Adrenal gland (tissue), 19 donors: ENCODE measurements at regions of chr13 and their contacts with region 1.

Region 1: DNA sequence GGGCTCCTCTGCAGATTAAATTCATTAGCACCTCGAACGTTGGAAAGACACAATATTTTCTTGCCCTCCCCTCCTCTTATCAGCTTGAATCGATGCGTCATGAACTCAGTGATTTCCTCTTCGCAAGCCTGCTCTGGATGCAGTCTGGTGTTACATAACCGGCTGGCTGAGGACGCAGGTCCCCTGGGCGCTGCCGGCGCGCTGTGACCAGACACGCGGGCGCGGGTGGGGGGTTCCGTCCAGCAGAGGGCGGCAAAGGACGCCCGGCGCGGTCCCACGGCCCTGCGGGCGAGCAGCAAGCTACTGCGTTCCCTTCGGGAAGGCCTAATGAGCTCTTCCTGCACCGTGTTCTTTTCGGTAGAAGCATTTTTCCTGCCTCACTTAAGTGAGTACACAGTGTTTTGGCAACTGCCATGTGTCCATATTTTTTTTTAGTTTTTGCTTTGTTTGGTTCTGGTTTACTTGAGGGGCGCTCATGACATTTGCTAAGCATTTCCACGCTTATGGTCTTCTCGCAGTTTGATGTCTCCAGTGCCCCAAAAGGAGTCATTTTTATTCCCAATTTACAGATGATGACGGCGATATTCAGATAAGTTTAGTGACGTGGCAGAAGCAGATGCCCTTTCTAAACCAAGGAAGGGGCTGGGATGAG is 112.2 kb upstream of the MBNL2 start:
- DNase-seq: peak; percentile 95 to 98 (median 96)
- H3K4me3 ChIP-seq: peak overlapping the region in 1 of 4 donors; percentile 16
- H3K27ac ChIP-seq: peak overlapping the region in 4 of 5 donors; percentile 10 to 61 (median 30)
- H3K4me1 ChIP-seq: peaks cover 9 to 38% of the 10 kb centered on the region in 2 donors
- H3K27me3 ChIP-seq: no peaks in the 10 kb centered on the region
- CTCF ChIP-seq: peak; percentile 91 to 98 (median 96)
- POLR2A ChIP-seq: peak in 1 of 2 donors; percentile 29

Region 2: GRCh38 chr13:96810104-96810503 is 299.9 kb before region 1 on chr13:
- intact Hi-C with region 1: no loop called
- DNase-seq: no peak
- H3K4me3 ChIP-seq: no peak overlapping the region
- H3K27ac ChIP-seq: no peak overlapping the region
- H3K4me1 ChIP-seq: no peaks in the 10 kb centered on the region
- H3K27me3 ChIP-seq: no peaks in the 10 kb centered on the region
- CTCF ChIP-seq: no peak
- POLR2A ChIP-seq: no peak

Region 3: GRCh38 chr13:97212601-97213040 is 102.7 kb after region 1 on chr13:
- intact Hi-C with region 1: loop called (anchors 5 kb)
- DNase-seq: peak in 3 of 7 donors; percentile 39 to 45 (median 40)
- H3K4me3 ChIP-seq: no peak overlapping the region
- H3K27ac ChIP-seq: peak overlapping the region in 1 of 5 donors; percentile 40
- H3K4me1 ChIP-seq: no peaks in the 10 kb centered on the region
- H3K27me3 ChIP-seq: no peaks in the 10 kb centered on the region
- CTCF ChIP-seq: peak; percentile 16 to 56 (median 50)
- POLR2A ChIP-seq: no peak